Aorta (tissue), 5 donors: ENCODE measurements at regions of chr17 and their contacts with region 1.

Region 1: DNA sequence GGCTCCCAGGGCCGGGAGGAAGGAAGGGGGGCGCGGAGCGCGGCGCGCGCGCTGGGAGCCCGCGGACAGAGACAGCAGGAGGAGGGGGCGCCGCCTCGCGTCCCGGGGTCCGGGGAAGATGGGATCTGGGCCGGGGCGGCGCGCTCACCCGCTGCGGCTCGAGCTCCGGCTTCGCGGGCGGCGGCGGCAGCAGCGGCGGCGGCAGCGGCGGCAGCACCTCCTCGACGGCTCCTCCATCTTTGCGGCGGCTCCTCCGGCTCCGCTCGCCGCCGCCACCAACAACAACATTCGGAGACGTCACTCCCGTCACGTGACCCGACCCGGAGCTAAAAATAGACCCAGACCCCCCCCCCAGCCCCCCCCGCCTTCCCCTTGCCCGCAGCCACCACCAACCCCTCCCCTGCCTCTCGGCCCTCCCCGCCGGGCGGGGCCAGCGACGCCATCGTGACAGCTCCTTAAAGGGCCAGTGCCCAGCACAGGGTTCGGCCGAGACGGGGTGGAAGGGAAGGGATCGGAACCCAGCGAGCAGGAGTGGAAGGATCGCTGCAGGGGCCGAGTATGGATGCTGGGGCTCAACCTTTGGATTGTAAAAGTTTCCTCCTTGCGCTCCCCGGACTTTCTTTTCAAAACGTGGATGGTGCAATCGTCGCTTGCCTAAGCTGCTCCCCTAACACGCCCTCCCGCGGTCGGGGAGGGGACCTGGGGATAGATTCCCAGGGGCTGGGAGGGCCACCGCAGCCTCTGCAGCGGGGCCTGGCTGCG is at the start of gene HDAC5:
- DNase-seq: peak; percentile 98
- ATAC-seq: peak; percentile 98
- H3K4me3 ChIP-seq: peak within 1 kb of the TSS; percentile 96 to 98
- H3K27ac ChIP-seq: peak within 1 kb of the TSS; percentile 69 to 76
- H3K4me1 ChIP-seq: no peaks in the 10 kb centered on the region
- H3K27me3 ChIP-seq: no peaks in the 10 kb centered on the region
- total RNA-seq, gene HDAC5: 69.7 to 82.6 TPM

Region 2: DNA sequence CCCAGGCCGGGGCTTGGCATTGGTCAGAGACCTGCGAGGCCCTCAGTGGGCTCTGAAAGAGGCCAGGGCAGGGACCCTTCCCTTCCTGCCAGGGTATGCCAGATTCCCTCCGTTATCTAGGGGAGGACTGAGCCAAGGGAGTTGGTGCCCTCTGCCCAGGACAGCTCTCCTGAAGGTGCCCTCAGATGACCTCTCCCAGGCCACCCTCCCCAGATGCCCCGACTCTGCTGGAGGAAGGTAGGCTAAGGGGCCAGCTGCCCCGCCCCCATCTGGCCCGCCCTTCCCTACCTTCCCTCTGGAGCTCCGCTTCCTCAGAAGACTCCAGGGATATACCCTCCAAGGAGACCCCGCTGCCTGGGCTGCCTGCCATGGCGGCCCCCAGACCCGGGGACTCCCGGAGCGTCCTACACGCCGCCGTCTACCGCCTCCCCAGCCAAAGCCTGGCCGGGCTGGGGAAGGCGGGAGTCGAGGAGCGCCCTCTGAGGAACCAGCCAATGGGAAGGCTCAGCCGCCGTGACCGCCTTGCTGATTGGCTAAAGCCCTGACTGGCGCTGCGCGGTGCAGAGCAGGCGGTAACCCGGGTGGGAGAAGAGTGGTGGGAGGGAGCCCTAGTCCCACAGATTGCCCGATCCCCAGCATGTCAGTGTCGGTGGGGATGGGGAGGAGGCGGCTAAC is 223.2 kb before region 1 on chr17:
- intact Hi-C with region 1: loop called in 1 of 2 experiments (anchors 10 kb)
- DNase-seq: peak; percentile 91 to 97
- ATAC-seq: peak; percentile 92
- H3K4me3 ChIP-seq: no peak overlapping the region
- H3K27ac ChIP-seq: no peak overlapping the region
- H3K4me1 ChIP-seq: no peaks in the 10 kb centered on the region
- H3K27me3 ChIP-seq: no peaks in the 10 kb centered on the region

Region 3: GRCh38 chr17:44070455-44071197 is 52.9 kb before region 1 on chr17 and contains the start of gene G6PC3:
- intact Hi-C with region 1: no loop called
- DNase-seq: peak; percentile 97
- ATAC-seq: peak; percentile 96
- H3K4me3 ChIP-seq: peak within 1 kb of the TSS; percentile 38 to 44
- H3K27ac ChIP-seq: peak within 1 kb of the TSS in 1 of 2 donors; percentile 54
- H3K4me1 ChIP-seq: no peaks in the 10 kb centered on the region
- H3K27me3 ChIP-seq: no peaks in the 10 kb centered on the region
- total RNA-seq, gene G6PC3: 30.3 to 32.5 TPM

Region 4: GRCh38 chr17:44110823-44111633 is 12.5 kb before region 1 on chr17:
- intact Hi-C with region 1: loop called in 1 of 2 experiments (anchors 1 kb)
- DNase-seq: peak; percentile 99 to 100
- ATAC-seq: peak; percentile 89
- H3K4me3 ChIP-seq: peak overlapping the region; percentile 2 to 61
- H3K27ac ChIP-seq: peak overlapping the region; percentile 36 to 90
- H3K4me1 ChIP-seq: peaks cover 4 to 6% of the 10 kb centered on the region in 2 donors
- H3K27me3 ChIP-seq: no peaks in the 10 kb centered on the region